Heart left ventricle (tissue), 16 donors: ENCODE measurements at regions of chr16 and their contacts with region 1.

Region 1: DNA sequence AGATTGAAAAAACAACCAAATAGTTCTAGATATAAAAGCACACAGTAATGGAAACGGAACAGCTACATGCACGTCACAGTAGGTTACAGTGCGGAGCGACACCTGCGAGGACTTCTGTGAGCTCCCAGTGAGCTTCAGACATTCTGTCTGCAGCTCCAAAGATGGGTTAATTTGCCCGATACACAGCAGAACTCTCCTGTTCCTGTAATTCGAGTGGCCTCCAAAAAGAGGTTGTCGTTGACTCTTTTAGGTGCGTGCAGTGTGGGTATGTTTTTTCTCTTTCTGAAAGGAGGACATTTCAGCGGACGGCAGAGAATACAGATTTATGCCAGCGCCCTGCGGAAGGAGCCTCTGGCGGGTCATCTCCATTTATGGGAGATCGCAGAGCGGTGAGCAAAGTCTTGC is 2.9 kb downstream of the OR1F1 start:
- DNase-seq: no peak
- ATAC-seq: no peak
- H3K4me3 ChIP-seq: no peak overlapping the region
- H3K27ac ChIP-seq: no peak overlapping the region
- H3K4me1 ChIP-seq: peaks cover 0 to 31% (median 13%) of the 10 kb centered on the region in 12 donors
- H3K27me3 ChIP-seq: peaks cover 60 to 100% (median 96%) of the 10 kb centered on the region in 9 donors
- CTCF ChIP-seq: no peak
- POLR2A ChIP-seq: no peak

Region 2: GRCh38 chr16:3413730-3414379 is 222.9 kb after region 1 on chr16:
- intact Hi-C with region 1: loop called in 1 of 10 experiments (anchors 10 kb)
- DNase-seq: no peak
- ATAC-seq: no peak
- H3K4me3 ChIP-seq: no peak overlapping the region
- H3K27ac ChIP-seq: no peak overlapping the region
- H3K4me1 ChIP-seq: no peaks in the 10 kb centered on the region
- H3K27me3 ChIP-seq: no peaks in the 10 kb centered on the region
- CTCF ChIP-seq: no peak
- POLR2A ChIP-seq: no peak